ENCODE measurements at regions of chr6 and their contacts with region 1.

Region 1: GRCh38 chr6:35139908-35140655 is 1.1 kb downstream of the TCP11 start:
- DNase-seq: peak in 39 of 42 donors; percentile 13 to 88 (median 66)

Region 2: DNA sequence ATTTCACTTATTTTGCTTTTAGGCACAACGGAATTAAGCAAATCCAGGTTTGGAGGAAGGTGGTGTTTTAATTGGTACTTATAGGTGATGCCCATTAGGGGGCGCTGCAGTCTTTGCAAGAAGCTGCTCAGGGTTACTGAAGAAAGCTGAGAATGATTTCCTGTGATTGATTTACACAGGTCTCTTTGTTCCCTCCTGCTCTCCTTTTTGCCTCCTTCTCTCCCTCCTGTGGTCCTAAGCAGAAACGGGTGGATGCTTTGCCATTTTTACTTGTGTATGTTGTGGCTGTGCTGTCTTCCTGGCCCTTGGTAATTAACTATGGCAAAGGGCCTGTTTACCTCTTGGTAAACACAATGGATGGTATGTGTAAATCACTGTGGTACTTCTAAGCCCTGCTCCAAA is 153.2 kb before region 1 on chr6:
- intact Hi-C with region 1: loop called (anchors 1 kb)
- DNase-seq: peak; percentile 42 to 93 (median 79)

Region 3: DNA sequence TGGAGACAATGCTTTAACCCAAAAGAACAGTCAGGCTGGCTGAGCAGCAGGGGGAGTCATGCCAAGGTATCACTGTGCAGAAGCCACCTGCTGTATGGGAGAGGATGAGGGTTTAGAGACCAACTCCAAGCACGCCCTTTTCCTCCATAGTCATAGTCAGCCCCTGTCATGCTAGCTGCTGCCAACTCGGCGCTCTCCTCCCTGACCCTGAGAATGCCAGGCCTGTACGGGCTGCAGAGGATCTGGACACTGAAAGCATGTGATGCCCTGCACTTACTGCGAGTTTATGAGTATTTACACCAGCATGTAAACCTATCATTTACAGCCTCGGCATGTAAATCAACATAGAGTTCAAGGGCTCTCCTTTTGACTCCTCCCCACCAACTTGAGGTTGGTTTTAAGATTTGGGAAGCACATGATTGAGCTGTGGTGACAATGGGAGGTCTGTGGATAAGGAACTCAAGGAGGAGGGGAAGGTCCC is 62.0 kb after region 1 on chr6:
- intact Hi-C with region 1: loop called (anchors 10 kb)
- DNase-seq: peak in 1 of 42 donors; percentile 13

Region 4: DNA sequence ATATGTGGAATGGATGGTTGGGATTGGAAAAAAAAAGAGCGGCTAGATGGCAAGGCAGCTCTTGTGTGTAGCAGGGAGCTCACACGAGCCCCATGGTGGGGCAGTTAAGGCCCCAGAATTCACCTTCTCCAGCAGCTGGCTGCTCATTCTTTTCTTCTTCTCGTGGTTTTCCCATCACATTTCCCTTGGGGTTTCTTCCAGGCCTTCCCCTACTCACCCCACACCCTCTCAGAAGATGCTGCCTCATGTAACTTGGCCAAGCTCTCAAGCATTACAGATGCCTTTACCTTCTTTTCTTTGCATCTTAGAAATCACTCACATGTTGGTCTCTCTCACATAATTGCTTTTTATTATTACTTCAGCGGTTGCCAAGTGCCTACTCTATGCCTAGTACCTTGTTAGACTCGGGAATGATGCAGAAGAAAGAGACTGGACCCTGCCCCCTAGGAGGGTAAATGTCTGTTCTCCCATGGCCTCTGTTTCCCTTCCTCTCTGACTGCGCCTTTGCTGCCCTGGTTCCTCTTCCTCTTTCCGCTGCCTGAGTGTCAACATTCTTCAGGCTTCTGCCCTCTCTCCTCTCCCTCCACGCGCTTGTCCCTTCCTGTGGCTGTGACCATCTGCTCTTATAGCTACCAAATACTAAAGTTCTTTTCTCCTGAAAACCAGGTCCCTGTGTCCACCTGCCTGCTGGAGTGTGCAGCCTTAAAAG is 230.9 kb after region 1 on chr6:
- intact Hi-C with region 1: no loop called
- DNase-seq: peak in 25 of 42 donors; percentile 14 to 62 (median 41)